Heart left ventricle (tissue), 16 donors: ENCODE measurements at regions of chr22 and their contacts with region 1.

Region 1: DNA sequence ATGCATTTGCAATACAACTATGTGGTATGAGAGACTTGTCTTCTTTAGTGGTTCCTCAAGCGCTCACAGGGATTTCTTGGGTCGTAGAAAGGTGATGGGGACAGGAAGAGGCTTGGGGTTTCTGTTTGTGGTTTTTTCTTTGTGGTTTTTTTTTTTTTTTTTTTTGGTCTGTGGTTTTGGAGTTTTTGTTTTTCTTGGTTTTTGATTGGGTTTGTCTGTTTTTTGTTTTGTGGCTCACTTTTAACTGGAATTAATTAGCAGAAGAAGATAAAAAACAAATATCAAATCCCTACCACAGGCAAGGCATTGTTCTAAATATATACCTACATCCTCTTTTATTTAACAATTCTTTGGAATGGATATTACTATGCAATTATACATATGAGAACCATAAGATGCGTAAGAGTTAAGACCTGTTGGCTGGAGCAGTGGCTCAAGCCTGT is 5.5 kb downstream of the TTC28 start:
- DNase-seq: no peak
- ATAC-seq: no peak
- H3K4me3 ChIP-seq: no peak overlapping the region
- H3K27ac ChIP-seq: no peak overlapping the region
- H3K4me1 ChIP-seq: peaks cover 0 to 17% (median 2%) of the 10 kb centered on the region in 12 donors
- H3K27me3 ChIP-seq: peaks cover 0 to 49% (median 0%) of the 10 kb centered on the region in 9 donors
- CTCF ChIP-seq: no peak
- POLR2A ChIP-seq: no peak

Region 2: GRCh38 chr22:28582806-28583205 is 91.3 kb before region 1 on chr22:
- intact Hi-C with region 1: no loop called
- DNase-seq: no peak
- ATAC-seq: peak in 1 of 4 donors; percentile 41
- H3K4me3 ChIP-seq: peak overlapping the region in 1 of 12 donors; percentile 12
- H3K27ac ChIP-seq: no peak overlapping the region
- H3K4me1 ChIP-seq: peaks cover 0 to 3% (median 0%) of the 10 kb centered on the region in 12 donors
- H3K27me3 ChIP-seq: no peaks in the 10 kb centered on the region
- CTCF ChIP-seq: no peak
- POLR2A ChIP-seq: no peak

Region 3: GRCh38 chr22:28609921-28610320 is 64.2 kb before region 1 on chr22:
- intact Hi-C with region 1: loop called in 1 of 10 experiments (anchors 10 kb)
- DNase-seq: no peak
- ATAC-seq: no peak
- H3K4me3 ChIP-seq: no peak overlapping the region
- H3K27ac ChIP-seq: no peak overlapping the region
- H3K4me1 ChIP-seq: peaks cover 0 to 13% (median 2%) of the 10 kb centered on the region in 12 donors
- H3K27me3 ChIP-seq: no peaks in the 10 kb centered on the region
- CTCF ChIP-seq: no peak
- POLR2A ChIP-seq: no peak

Region 4: GRCh38 chr22:28710584-28711191 is 36.5 kb after region 1 on chr22:
- intact Hi-C with region 1: loop called in 1 of 10 experiments (anchors 1 kb)
- DNase-seq: no peak
- ATAC-seq: peak in 3 of 4 donors; percentile 59 to 84 (median 81)
- H3K4me3 ChIP-seq: peak overlapping the region in 3 of 12 donors; percentile 4 to 16 (median 5)
- H3K27ac ChIP-seq: peak overlapping the region in 11 of 12 donors; percentile 11 to 81 (median 65)
- H3K4me1 ChIP-seq: peaks cover 0 to 27% (median 10%) of the 10 kb centered on the region in 12 donors
- H3K27me3 ChIP-seq: no peaks in the 10 kb centered on the region
- CTCF ChIP-seq: no peak
- POLR2A ChIP-seq: no peak

Region 5: DNA sequence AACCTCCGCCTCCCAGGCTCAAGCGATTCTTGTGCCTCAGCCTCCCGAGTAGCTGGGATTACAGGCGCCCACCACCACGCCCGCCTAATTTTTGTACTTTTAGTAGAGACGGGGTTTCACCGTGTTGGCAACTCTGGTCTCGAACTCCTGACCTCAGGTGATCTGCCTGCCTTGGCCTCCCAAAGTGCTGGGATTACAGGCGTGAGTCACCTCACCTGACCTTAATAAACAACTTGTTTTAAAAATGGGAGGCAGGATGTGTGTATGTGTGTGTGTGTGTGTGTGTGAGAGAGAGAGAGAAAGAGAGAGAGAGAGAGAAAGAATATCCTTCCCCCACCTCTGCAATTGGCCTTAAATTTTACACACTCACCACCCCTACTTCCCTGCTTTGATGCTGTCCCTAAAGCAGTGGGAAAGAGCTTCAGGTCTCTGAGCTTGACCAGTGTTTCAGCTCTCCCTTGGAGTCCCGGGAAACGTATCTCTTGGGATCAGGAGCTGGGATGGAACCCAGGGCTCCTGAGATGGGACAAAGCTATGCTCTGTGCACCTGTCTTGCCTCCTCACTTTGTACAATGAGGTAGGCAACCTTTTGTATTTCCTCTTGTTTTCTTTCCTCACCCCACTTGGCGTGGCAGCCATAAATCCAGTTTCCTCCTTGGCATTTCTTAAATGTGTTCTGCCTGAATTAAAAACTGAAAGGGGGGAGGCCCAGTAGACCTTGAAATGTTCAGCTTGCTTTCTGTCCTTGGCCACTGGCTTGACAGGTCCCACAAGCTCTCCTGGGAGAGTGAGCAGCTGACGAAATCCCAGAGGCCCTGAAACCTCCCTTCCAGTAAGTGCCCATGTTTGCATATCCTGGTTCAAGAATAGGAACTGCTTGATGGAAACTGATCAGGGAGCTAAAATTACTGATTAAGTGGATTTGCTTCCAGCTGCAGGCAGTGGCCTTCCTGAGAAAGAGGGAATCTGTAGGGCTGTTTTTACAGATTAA is 144.1 kb after region 1 on chr22:
- intact Hi-C with region 1: no loop called
- DNase-seq: peak in 3 of 5 donors; percentile 29 to 55 (median 50)
- ATAC-seq: peak in 3 of 4 donors; percentile 81 to 85 (median 84)
- H3K4me3 ChIP-seq: no peak overlapping the region
- H3K27ac ChIP-seq: peak overlapping the region in 10 of 12 donors; percentile 16 to 80 (median 38)
- H3K4me1 ChIP-seq: peaks cover 0 to 46% (median 12%) of the 10 kb centered on the region in 12 donors
- H3K27me3 ChIP-seq: no peaks in the 10 kb centered on the region
- CTCF ChIP-seq: no peak
- POLR2A ChIP-seq: no peak